CD4-positive, alpha-beta memory T cell (primary cell): ENCODE measurements at regions of chr11 and their contacts with region 1.

Region 1: DNA sequence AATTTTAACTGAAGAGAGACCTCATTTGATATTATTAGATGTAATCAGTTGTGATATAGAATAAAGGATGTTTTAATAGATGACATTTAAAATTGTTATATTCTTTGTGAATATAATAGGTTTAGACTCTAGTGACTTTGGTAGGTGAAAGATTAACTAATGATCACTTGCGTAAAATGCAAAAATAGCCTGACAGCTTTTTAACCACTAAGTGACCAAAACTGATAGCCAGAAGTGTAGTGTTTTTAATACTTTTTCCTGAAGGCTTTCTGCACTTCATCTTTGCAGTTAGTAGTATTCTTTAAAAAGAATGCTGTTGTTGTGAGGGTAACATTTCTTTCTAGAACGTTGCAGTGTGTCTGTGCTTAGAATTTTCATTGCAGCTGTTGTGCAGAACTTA is 5.1 kb downstream of the CAPRIN1 start:
- DNase-seq: no peak
- H3K4me3 ChIP-seq: no peak overlapping the region
- H3K4me3 Mint-ChIP-seq: peak overlapping the region in 5 of 8 donors; percentile 21 to 68 (median 57)
- H3K27ac ChIP-seq: no peak overlapping the region
- H3K27ac Mint-ChIP-seq: peak overlapping the region in 3 of 7 donors; percentile 31 to 98 (median 33)
- H3K4me1 ChIP-seq: peaks cover 76% of the 10 kb centered on the region
- H3K4me1 Mint-ChIP-seq: peaks cover 30 to 74% (median 48%) of the 10 kb centered on the region in 4 donors
- H3K27me3 ChIP-seq: no peaks in the 10 kb centered on the region
- H3K27me3 Mint-ChIP-seq: no peaks in the 10 kb centered on the region

Region 2: DNA sequence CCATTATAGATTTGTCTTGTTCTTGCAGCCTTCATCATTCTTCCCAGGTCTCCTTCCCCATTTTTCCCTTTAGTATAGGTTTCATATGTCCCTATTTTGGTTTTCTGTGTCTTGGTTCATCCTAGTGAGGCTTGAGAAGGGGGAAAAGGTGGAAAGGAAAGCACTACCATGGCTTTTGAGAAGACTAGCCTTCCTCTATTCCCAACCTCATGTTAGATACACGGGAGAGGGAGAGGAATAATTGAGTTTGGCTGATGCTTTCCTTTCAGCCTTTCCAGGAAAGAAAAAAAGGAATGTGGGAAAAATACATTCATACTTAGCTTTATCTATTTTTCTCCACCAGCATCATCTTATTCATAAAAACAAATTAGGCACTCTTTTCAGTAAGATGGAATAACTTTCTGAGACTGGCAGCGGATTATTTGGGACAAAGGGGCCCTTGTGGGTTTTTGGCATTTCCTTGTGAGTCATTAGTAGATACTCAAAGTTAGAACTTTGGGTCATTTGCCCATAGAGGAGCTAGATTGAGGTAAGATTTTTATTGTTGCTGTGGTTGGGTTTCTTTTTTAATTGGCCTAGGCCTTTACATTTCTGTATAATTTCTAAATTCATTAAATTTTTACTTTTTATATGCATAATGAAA is 18.6 kb after region 1 on chr11:
- CTCF ChIA-PET with region 1: interaction called, 5 read pairs
- POLR2A ChIA-PET with region 1: interaction called, 7 read pairs
- intact Hi-C with region 1: loop called (anchors 2 kb)
- DNase-seq: no peak
- H3K4me3 ChIP-seq: no peak overlapping the region
- H3K4me3 Mint-ChIP-seq: peak overlapping the region in 1 of 8 donors; percentile 54
- H3K27ac ChIP-seq: no peak overlapping the region
- H3K27ac Mint-ChIP-seq: peak overlapping the region in 6 of 7 donors; percentile 1 to 68 (median 43)
- H3K4me1 ChIP-seq: peaks cover 33% of the 10 kb centered on the region
- H3K4me1 Mint-ChIP-seq: peaks cover 21 to 54% (median 37%) of the 10 kb centered on the region in 4 donors
- H3K27me3 ChIP-seq: no peaks in the 10 kb centered on the region
- H3K27me3 Mint-ChIP-seq: no peaks in the 10 kb centered on the region